ENCODE measurements at regions of chr2 and their contacts with region 1.

Region 1: GRCh38 chr2:1140389-1141003 is 189.8 kb downstream of the SNTG2 start:
- DNase-seq: peak in 4 of 5 donors; percentile 20 to 49 (median 38)
- H3K4me3 ChIP-seq: no peak overlapping the region
- H3K4me3 Mint-ChIP-seq: no peak overlapping the region
- H3K27ac ChIP-seq: no peak overlapping the region
- H3K27ac Mint-ChIP-seq: peak overlapping the region in 1 of 7 donors; percentile 57
- H3K4me1 ChIP-seq: no peaks in the 10 kb centered on the region
- H3K4me1 Mint-ChIP-seq: peaks cover 4 to 15% (median 10%) of the 10 kb centered on the region in 4 donors
- H3K27me3 ChIP-seq: no peaks in the 10 kb centered on the region
- H3K27me3 Mint-ChIP-seq: peaks cover 0 to 4% of the 10 kb centered on the region in 2 donors

Region 2: DNA sequence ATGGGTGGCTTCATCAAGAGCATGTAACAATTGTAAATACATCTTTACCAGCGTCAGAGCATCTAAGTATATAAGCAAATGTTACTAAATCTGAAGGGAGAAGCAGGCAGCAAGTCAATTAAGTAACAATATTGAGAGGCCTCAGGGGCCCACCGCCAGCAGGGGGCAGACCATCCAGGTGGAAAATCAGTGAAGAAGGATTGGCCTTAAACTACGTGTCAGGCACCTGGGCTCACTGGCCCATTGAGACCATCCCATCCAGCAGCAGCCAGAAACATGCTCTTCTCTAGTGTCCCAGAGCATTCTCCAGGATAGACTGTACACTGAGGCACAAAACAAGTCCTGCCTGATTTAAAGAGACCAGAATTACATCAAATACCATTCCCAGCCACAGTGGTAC is 286.0 kb before region 1 on chr2:
- CTCF ChIA-PET with region 1: no interaction called
- POLR2A ChIA-PET with region 1: no interaction called
- intact Hi-C with region 1: loop called (anchors 2 kb)
- DNase-seq: peak in 2 of 5 donors; percentile 14 to 42
- H3K4me3 ChIP-seq: no peak overlapping the region
- H3K4me3 Mint-ChIP-seq: peak overlapping the region in 5 of 8 donors; percentile 32 to 71 (median 52)
- H3K27ac ChIP-seq: no peak overlapping the region
- H3K27ac Mint-ChIP-seq: peak overlapping the region in 3 of 7 donors; percentile 33 to 91 (median 43)
- H3K4me1 ChIP-seq: peaks cover 17% of the 10 kb centered on the region
- H3K4me1 Mint-ChIP-seq: peaks cover 9 to 31% (median 21%) of the 10 kb centered on the region in 4 donors
- H3K27me3 ChIP-seq: no peaks in the 10 kb centered on the region
- H3K27me3 Mint-ChIP-seq: no peaks in the 10 kb centered on the region

Region 3: GRCh38 chr2:1010415-1010930 is 130.0 kb before region 1 on chr2:
- CTCF ChIA-PET with region 1: no interaction called
- POLR2A ChIA-PET with region 1: no interaction called
- intact Hi-C with region 1: no loop called
- DNase-seq: no peak
- H3K4me3 ChIP-seq: no peak overlapping the region
- H3K4me3 Mint-ChIP-seq: no peak overlapping the region
- H3K27ac ChIP-seq: no peak overlapping the region
- H3K27ac Mint-ChIP-seq: no peak overlapping the region
- H3K4me1 ChIP-seq: no peaks in the 10 kb centered on the region
- H3K4me1 Mint-ChIP-seq: peaks cover 0 to 3% (median 0%) of the 10 kb centered on the region in 4 donors
- H3K27me3 ChIP-seq: no peaks in the 10 kb centered on the region
- H3K27me3 Mint-ChIP-seq: peaks cover 6 to 9% of the 10 kb centered on the region in 2 donors

Region 4: DNA sequence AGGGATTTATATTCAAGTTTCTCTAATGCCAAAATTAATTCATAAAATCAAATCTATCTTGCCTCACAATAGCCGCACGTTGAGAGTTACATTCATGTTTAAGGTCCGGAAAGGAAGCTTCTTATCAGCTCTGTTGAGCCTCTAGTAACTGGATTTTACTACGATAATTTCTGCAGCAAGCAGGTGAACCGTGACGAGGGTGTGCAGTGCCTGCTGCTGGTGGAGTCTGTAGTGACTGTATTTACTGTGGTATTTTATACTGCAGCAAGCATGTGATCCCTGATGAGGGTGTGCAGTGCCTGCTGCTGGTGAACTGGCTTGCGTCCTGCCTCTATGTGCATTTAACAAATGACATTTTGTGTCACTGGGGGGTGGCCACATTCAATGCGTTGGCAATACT is 69.9 kb before region 1 on chr2:
- CTCF ChIA-PET with region 1: no interaction called
- POLR2A ChIA-PET with region 1: no interaction called
- intact Hi-C with region 1: no loop called
- DNase-seq: no peak
- H3K4me3 ChIP-seq: no peak overlapping the region
- H3K4me3 Mint-ChIP-seq: no peak overlapping the region
- H3K27ac ChIP-seq: no peak overlapping the region
- H3K27ac Mint-ChIP-seq: no peak overlapping the region
- H3K4me1 ChIP-seq: no peaks in the 10 kb centered on the region
- H3K4me1 Mint-ChIP-seq: no peaks in the 10 kb centered on the region
- H3K27me3 ChIP-seq: no peaks in the 10 kb centered on the region
- H3K27me3 Mint-ChIP-seq: peaks cover 0 to 1% of the 10 kb centered on the region in 2 donors

Region 5: GRCh38 chr2:1125633-1126370 is 14.7 kb before region 1 on chr2:
- CTCF ChIA-PET with region 1: interaction called, 13 read pairs
- POLR2A ChIA-PET with region 1: no interaction called
- intact Hi-C with region 1: no loop called
- DNase-seq: no peak
- H3K4me3 ChIP-seq: no peak overlapping the region
- H3K4me3 Mint-ChIP-seq: no peak overlapping the region
- H3K27ac ChIP-seq: no peak overlapping the region
- H3K27ac Mint-ChIP-seq: no peak overlapping the region
- H3K4me1 ChIP-seq: no peaks in the 10 kb centered on the region
- H3K4me1 Mint-ChIP-seq: peaks cover 0 to 2% (median under 1%) of the 10 kb centered on the region in 4 donors
- H3K27me3 ChIP-seq: no peaks in the 10 kb centered on the region
- H3K27me3 Mint-ChIP-seq: no peaks in the 10 kb centered on the region

Region 6: DNA sequence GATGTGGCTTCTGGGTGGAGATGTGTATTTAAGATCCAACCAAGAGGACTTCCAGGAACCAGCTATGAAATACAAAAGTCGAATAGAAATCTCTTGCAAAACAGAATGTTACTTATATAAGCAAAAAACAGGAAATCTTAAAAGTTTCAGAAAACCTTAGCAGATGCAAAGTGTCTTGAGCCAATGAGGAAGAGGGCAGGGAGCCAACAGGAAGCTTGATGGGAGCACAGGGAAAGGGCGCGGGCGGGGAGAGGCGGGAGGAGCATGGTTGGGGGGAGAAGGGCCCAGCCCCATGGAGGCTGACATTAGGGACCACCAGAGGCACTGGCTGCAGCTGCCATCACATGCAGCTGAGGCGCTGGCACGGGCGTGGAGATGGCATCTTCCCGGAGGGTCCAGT is 13.4 kb after region 1 on chr2:
- CTCF ChIA-PET with region 1: interaction called, 12 read pairs
- POLR2A ChIA-PET with region 1: no interaction called
- intact Hi-C with region 1: no loop called
- DNase-seq: no peak
- H3K4me3 ChIP-seq: no peak overlapping the region
- H3K4me3 Mint-ChIP-seq: no peak overlapping the region
- H3K27ac ChIP-seq: no peak overlapping the region
- H3K27ac Mint-ChIP-seq: no peak overlapping the region
- H3K4me1 ChIP-seq: no peaks in the 10 kb centered on the region
- H3K4me1 Mint-ChIP-seq: peaks cover 0 to 3% (median 0%) of the 10 kb centered on the region in 4 donors
- H3K27me3 ChIP-seq: no peaks in the 10 kb centered on the region
- H3K27me3 Mint-ChIP-seq: no peaks in the 10 kb centered on the region

Region 7: GRCh38 chr2:1353543-1353942 is 213.0 kb after region 1 on chr2:
- CTCF ChIA-PET with region 1: no interaction called
- POLR2A ChIA-PET with region 1: no interaction called
- intact Hi-C with region 1: no loop called
- DNase-seq: no peak
- H3K4me3 ChIP-seq: no peak overlapping the region
- H3K4me3 Mint-ChIP-seq: no peak overlapping the region
- H3K27ac ChIP-seq: no peak overlapping the region
- H3K27ac Mint-ChIP-seq: no peak overlapping the region
- H3K4me1 ChIP-seq: no peaks in the 10 kb centered on the region
- H3K4me1 Mint-ChIP-seq: no peaks in the 10 kb centered on the region
- H3K27me3 ChIP-seq: no peaks in the 10 kb centered on the region
- H3K27me3 Mint-ChIP-seq: no peaks in the 10 kb centered on the region

Measured in CD4-positive, alpha-beta memory T cell (primary cell).